Psoas muscle (tissue), 8 donors: ENCODE measurements at regions of chr16 and their contacts with region 1.

Region 1: GRCh38 chr16:16021988-16022682 is 72.7 kb downstream of the ABCC1 start:
- DNase-seq: peak; percentile 99
- ATAC-seq: peak; percentile 97 to 99 (median 98)
- H3K4me3 ChIP-seq: peak overlapping the region; percentile 35
- H3K27ac ChIP-seq: peak overlapping the region; percentile 84
- H3K4me1 ChIP-seq: peaks cover 45% of the 10 kb centered on the region
- H3K27me3 ChIP-seq: no peaks in the 10 kb centered on the region
- CTCF ChIP-seq: no peak

Region 2: GRCh38 chr16:15996432-15997109 is 25.6 kb before region 1 on chr16:
- intact Hi-C with region 1: loop called in 1 of 2 experiments (anchors 2 kb)
- DNase-seq: peak; percentile 70 to 80
- ATAC-seq: peak; percentile 66 to 78 (median 76)
- H3K4me3 ChIP-seq: no peak overlapping the region
- H3K27ac ChIP-seq: peak overlapping the region; percentile 82
- H3K4me1 ChIP-seq: peaks cover 54% of the 10 kb centered on the region
- H3K27me3 ChIP-seq: no peaks in the 10 kb centered on the region
- CTCF ChIP-seq: no peak

Region 3: GRCh38 chr16:16062023-16062932 is 40.1 kb after region 1 on chr16:
- intact Hi-C with region 1: loop called in 1 of 2 experiments (anchors 5 kb)
- DNase-seq: no peak
- ATAC-seq: peak in 1 of 4 donors; percentile 9
- H3K4me3 ChIP-seq: no peak overlapping the region
- H3K27ac ChIP-seq: peak overlapping the region; percentile 80
- H3K4me1 ChIP-seq: peaks cover 31% of the 10 kb centered on the region
- H3K27me3 ChIP-seq: no peaks in the 10 kb centered on the region
- CTCF ChIP-seq: no peak